MCF 10A (cell line): ENCODE measurements at regions of chr10 and their contacts with region 1.

Region 1: DNA sequence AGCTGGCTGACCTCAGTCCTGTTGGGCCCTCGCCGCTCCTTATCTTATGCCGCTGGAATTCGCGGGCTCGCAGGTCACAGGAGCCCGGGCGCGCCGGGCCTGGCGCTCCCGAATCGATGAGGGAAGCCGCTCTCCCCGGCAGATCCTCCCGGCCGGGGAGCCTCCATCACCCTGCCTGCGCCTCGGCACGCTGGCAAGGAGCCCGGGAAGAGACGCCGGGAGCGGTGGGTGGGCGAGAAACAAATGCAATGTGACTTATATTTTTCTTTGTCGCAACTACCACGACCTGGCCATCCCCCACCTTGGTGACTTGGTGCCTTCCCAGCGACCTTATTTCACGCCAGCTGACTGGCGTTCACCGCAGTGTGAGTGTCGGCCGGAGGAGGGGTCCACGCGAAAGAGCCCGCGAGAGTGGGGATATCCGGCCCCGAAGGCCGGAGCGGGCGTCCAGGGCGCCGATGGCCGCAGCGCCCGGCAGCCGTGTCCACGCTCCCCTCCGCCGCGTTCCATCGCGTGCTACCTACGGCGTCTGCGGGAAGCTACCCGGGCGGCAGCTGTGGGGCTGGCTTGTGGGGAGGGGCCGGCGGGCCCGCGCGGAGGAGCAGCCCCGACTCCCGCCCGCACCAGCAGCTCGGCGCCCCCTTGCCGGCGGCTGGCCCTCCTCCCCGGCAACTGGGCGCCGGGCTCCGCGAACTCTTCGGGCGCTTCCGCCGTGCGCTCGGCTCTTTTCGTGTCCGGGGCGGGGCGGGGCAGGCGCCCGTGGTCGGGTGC is 494 bp upstream of the BMPR1A start:
- DNase-seq: peak; percentile 67
- H3K4me3 Mint-ChIP-seq: peak overlapping the region; percentile 84
- H3K27ac Mint-ChIP-seq: peak overlapping the region; percentile 84
- H3K4me1 Mint-ChIP-seq: peaks cover 42% of the 10 kb centered on the region
- H3K27me3 Mint-ChIP-seq: no peaks in the 10 kb centered on the region
- CTCF ChIP-seq: no peak

Region 2: GRCh38 chr10:85946713-85947326 is 809.1 kb before region 1 on chr10:
- CTCF ChIA-PET with region 1: no interaction called
- POLR2A ChIA-PET with region 1: no interaction called
- intact Hi-C with region 1: no loop called
- DNase-seq: no peak
- H3K4me3 Mint-ChIP-seq: no peak overlapping the region
- H3K27ac Mint-ChIP-seq: no peak overlapping the region
- H3K4me1 Mint-ChIP-seq: no peaks in the 10 kb centered on the region
- H3K27me3 Mint-ChIP-seq: no peaks in the 10 kb centered on the region
- CTCF ChIP-seq: no peak

Region 3: GRCh38 chr10:86592413-86592812 is 163.5 kb before region 1 on chr10:
- CTCF ChIA-PET with region 1: no interaction called
- POLR2A ChIA-PET with region 1: no interaction called
- intact Hi-C with region 1: loop called (anchors 5 kb)
- DNase-seq: peak; percentile 39
- H3K4me3 Mint-ChIP-seq: no peak overlapping the region
- H3K27ac Mint-ChIP-seq: no peak overlapping the region
- H3K4me1 Mint-ChIP-seq: peaks cover 7% of the 10 kb centered on the region
- H3K27me3 Mint-ChIP-seq: no peaks in the 10 kb centered on the region
- CTCF ChIP-seq: no peak

Region 4: GRCh38 chr10:86710987-86711512 is 44.9 kb before region 1 on chr10:
- CTCF ChIA-PET with region 1: interaction called, 5 read pairs
- POLR2A ChIA-PET with region 1: interaction called, 9 read pairs
- intact Hi-C with region 1: loop called (anchors 1 kb)
- DNase-seq: peak; percentile 89
- H3K4me3 Mint-ChIP-seq: peak overlapping the region; percentile 73
- H3K27ac Mint-ChIP-seq: peak overlapping the region; percentile 96
- H3K4me1 Mint-ChIP-seq: peaks cover 5% of the 10 kb centered on the region
- H3K27me3 Mint-ChIP-seq: no peaks in the 10 kb centered on the region
- CTCF ChIP-seq: peak; percentile 85

Region 5: GRCh38 chr10:86775056-86775869 is 19.3 kb after region 1 on chr10:
- CTCF ChIA-PET with region 1: interaction called, 7 read pairs
- POLR2A ChIA-PET with region 1: interaction called, 48 read pairs
- intact Hi-C with region 1: no loop called
- DNase-seq: peak; percentile 23
- H3K4me3 Mint-ChIP-seq: no peak overlapping the region
- H3K27ac Mint-ChIP-seq: peak overlapping the region; percentile 5
- H3K4me1 Mint-ChIP-seq: peaks cover 33% of the 10 kb centered on the region
- H3K27me3 Mint-ChIP-seq: no peaks in the 10 kb centered on the region
- CTCF ChIP-seq: no peak

Region 6: DNA sequence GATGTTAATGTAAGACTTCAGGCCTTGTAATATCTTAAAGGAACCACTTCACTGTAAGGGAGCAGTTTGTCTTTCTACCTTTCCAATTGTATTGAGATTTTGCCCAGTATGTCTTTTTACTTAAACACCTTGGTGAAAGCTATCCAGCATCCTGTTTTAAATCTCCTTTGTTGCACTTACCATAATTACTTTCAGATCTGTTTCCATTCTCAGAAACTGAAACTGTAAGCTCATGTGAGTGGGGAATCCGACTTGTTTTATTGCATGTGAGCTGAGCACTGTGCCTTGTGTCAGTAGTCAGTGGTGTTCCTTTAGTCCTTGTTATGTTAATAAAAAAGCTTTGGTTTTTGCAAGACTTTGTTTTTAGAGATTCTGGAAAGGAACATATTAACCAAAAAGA is 42.7 kb after region 1 on chr10:
- CTCF ChIA-PET with region 1: interaction called, 4 read pairs
- POLR2A ChIA-PET with region 1: interaction called, 11 read pairs
- intact Hi-C with region 1: loop called (anchors 5 kb)
- DNase-seq: no peak
- H3K4me3 Mint-ChIP-seq: no peak overlapping the region
- H3K27ac Mint-ChIP-seq: no peak overlapping the region
- H3K4me1 Mint-ChIP-seq: peaks cover 19% of the 10 kb centered on the region
- H3K27me3 Mint-ChIP-seq: no peaks in the 10 kb centered on the region
- CTCF ChIP-seq: no peak